Activated CD4-positive, alpha-beta memory T cell treated with anti-CD3 and anti-CD28 coated beads, Interleukin-2, amount 10 ng/mL, durations not matched to agents 7 days and 5 days (primary cell): ENCODE measurements at regions of chr7 and their contacts with region 1.

Region 1: GRCh38 chr7:30276203-30276900 is 8.0 kb upstream of the ZNRF2 start:
- DNase-seq: peak; percentile 57
- H3K4me3 Mint-ChIP-seq: no peak overlapping the region
- H3K27ac Mint-ChIP-seq: no peak overlapping the region
- H3K4me1 Mint-ChIP-seq: peaks cover 7% of the 10 kb centered on the region
- H3K27me3 Mint-ChIP-seq: no peaks in the 10 kb centered on the region

Region 2: DNA sequence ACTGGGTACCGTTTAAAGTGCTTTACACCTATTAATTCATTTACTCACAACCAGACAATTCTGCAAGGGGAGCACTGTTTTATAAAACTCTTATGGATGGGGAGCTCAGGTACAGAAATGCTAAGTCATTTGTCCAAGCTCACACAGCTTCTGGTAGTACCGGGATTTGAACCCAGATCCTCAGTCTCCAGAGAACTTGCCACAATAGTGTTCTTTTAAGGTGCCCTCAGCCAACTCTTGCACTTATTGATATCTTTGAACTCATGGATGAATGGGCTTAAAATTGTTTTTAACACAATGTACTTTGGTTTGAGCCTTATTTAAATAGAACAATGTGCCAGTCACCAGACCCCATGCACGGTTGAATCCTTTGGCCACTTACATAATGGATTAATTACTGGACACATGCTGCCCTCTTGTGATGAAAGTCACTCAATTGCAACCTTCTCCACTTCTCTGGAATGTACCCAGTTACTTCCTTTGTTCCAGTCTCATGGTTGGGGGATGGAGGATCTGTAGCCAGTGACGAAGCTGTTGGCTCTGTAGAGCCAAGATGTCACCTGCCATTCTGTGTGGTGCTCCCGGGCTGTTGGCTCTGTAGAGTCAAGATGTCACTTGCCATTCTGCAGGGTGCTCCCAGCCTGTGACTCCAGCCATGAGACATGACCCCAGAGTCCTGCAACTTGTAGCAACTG is 136.6 kb after region 1 on chr7:
- CTCF ChIA-PET with region 1: interaction called, 28 read pairs
- POLR2A ChIA-PET with region 1: no interaction called
- DNase-seq: no peak
- H3K4me3 Mint-ChIP-seq: no peak overlapping the region
- H3K27ac Mint-ChIP-seq: no peak overlapping the region
- H3K4me1 Mint-ChIP-seq: no peaks in the 10 kb centered on the region
- H3K27me3 Mint-ChIP-seq: no peaks in the 10 kb centered on the region